B cell (primary cell): ENCODE measurements at regions of chr2 and their contacts with region 1.

Region 1: GRCh38 chr2:26577434-26578112 is 63.6 kb downstream of the CIB4 start:
- DNase-seq: peak; percentile 67
- ATAC-seq: peak; percentile 88
- H3K4me3 ChIP-seq: no peak overlapping the region
- H3K4me3 Mint-ChIP-seq: no peak overlapping the region
- H3K27ac ChIP-seq: no peak overlapping the region
- H3K27ac Mint-ChIP-seq: no peak overlapping the region
- H3K4me1 ChIP-seq: no peaks in the 10 kb centered on the region
- H3K4me1 Mint-ChIP-seq: peaks cover 2% of the 10 kb centered on the region
- H3K27me3 ChIP-seq: peaks cover 0 to 16% (median 0%) of the 10 kb centered on the region in 4 experiments
- H3K27me3 Mint-ChIP-seq: peaks cover 48% of the 10 kb centered on the region
- CTCF ChIP-seq: peak; percentile 99

Region 2: GRCh38 chr2:26509141-26509540 is 68.4 kb before region 1 on chr2:
- CTCF ChIA-PET with region 1: no interaction called
- POLR2A ChIA-PET with region 1: no interaction called
- intact Hi-C with region 1: no loop called
- DNase-seq: no peak
- ATAC-seq: no peak
- H3K4me3 ChIP-seq: no peak overlapping the region
- H3K4me3 Mint-ChIP-seq: no peak overlapping the region
- H3K27ac ChIP-seq: no peak overlapping the region
- H3K27ac Mint-ChIP-seq: no peak overlapping the region
- H3K4me1 ChIP-seq: no peaks in the 10 kb centered on the region
- H3K4me1 Mint-ChIP-seq: no peaks in the 10 kb centered on the region
- H3K27me3 ChIP-seq: peaks cover 0 to 4% (median 1%) of the 10 kb centered on the region in 4 experiments
- H3K27me3 Mint-ChIP-seq: peaks cover 7% of the 10 kb centered on the region
- CTCF ChIP-seq: no peak

Region 3: GRCh38 chr2:26587994-26588393 is 10.4 kb after region 1 on chr2:
- CTCF ChIA-PET with region 1: interaction called, 12 read pairs
- POLR2A ChIA-PET with region 1: interaction called, 4 read pairs
- intact Hi-C with region 1: no loop called
- DNase-seq: no peak
- ATAC-seq: no peak
- H3K4me3 ChIP-seq: no peak overlapping the region
- H3K4me3 Mint-ChIP-seq: no peak overlapping the region
- H3K27ac ChIP-seq: no peak overlapping the region
- H3K27ac Mint-ChIP-seq: no peak overlapping the region
- H3K4me1 ChIP-seq: no peaks in the 10 kb centered on the region
- H3K4me1 Mint-ChIP-seq: no peaks in the 10 kb centered on the region
- H3K27me3 ChIP-seq: peaks cover 0 to 3% (median 0%) of the 10 kb centered on the region in 4 experiments
- H3K27me3 Mint-ChIP-seq: peaks cover 28% of the 10 kb centered on the region
- CTCF ChIP-seq: no peak